ENCODE measurements at regions of chr4 and their contacts with region 1.

Region 1: DNA sequence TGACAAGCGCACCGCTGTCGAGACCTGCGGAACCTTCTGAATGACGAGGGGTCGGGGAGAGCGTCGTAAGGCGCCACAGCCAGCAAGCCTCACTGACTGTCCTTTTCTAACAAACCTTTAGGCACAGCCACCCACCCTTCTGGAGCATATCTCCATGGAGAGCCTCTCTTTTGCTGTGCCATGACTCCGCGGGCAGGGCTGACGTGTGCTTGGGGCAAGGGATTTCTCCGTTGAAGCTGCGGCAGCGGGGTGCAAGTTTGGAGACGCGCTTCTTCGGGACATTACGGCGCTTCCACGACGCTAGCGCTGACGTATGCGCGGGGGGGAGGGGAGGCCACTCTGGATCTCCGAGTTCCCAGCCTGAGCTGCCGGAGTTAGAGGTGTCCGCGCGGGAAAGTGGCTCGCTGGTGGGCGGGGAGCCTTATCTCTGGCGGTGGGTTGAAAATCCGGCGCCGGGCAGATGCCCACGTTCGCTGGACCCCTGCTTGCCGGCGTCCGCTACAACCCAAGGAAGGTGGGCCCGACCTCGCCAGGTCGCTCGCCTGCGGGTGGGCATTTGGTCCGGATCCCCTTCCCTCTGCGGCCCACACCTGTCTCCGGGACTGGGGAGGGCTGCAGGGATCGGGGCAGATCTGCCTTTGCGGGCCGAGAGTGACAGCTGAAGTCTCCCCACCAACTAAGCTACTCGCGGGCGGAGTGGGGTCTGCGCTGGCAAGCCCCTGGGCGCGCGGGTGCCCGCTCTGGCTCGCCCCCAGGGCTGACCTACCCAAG is 543 bp upstream of the SLC10A7 start:
- DNase-seq: peak; percentile 63 to 83 (median 76)
- ATAC-seq: peak; percentile 93
- H3K4me3 ChIP-seq: peak overlapping the region; percentile 95
- H3K4me3 Mint-ChIP-seq: no peak overlapping the region
- H3K27ac ChIP-seq: peak overlapping the region; percentile 85
- H3K27ac Mint-ChIP-seq: peak overlapping the region in 2 of 9 donors; percentile 58 to 69
- H3K4me1 ChIP-seq: peaks cover 13 to 24% of the 10 kb centered on the region in 2 donors
- H3K4me1 Mint-ChIP-seq: peaks cover 17 to 37% (median 31%) of the 10 kb centered on the region in 7 donors
- H3K27me3 ChIP-seq: no peaks in the 10 kb centered on the region
- H3K27me3 Mint-ChIP-seq: peaks cover 0 to 7% (median 0%) of the 10 kb centered on the region in 5 donors

Region 2: DNA sequence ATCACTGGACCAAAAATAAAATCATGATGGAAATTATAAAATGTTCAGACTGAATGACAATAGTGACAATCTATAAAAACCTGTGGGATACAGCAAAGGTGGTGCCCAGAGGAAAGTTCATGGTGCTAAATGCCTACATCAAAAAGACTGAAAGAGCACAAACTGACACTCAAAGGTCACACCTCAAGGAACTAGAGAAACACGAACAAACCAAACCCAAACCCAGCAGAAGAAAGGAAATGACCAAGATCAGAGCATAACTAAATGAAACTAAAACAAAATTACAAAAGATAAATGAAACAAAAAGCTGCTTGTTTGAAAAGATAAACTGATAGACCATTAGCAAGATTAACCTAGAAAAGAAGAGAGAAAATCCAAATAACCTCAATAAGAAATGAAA is 1502.9 kb before region 1 on chr4:
- CTCF ChIA-PET with region 1: no interaction called
- POLR2A ChIA-PET with region 1: no interaction called
- intact Hi-C with region 1: loop called in 1 of 2 experiments (anchors 5 kb)
- DNase-seq: peak in 2 of 9 donors; percentile 1 to 5
- ATAC-seq: no peak
- H3K4me3 ChIP-seq: no peak overlapping the region
- H3K4me3 Mint-ChIP-seq: peak overlapping the region in 9 of 10 donors; percentile 0 to 78 (median 52)
- H3K27ac ChIP-seq: peak overlapping the region; percentile 29
- H3K27ac Mint-ChIP-seq: peak overlapping the region in 8 of 9 donors; percentile 50 to 93 (median 74)
- H3K4me1 ChIP-seq: peaks cover 6 to 11% of the 10 kb centered on the region in 2 donors
- H3K4me1 Mint-ChIP-seq: peaks cover 16 to 52% (median 40%) of the 10 kb centered on the region in 7 donors
- H3K27me3 ChIP-seq: no peaks in the 10 kb centered on the region
- H3K27me3 Mint-ChIP-seq: no peaks in the 10 kb centered on the region

Region 3: GRCh38 chr4:146175541-146176453 is 346.5 kb before region 1 on chr4 and contains the start of gene LSM6:
- CTCF ChIA-PET with region 1: no interaction called
- POLR2A ChIA-PET with region 1: no interaction called
- intact Hi-C with region 1: loop called (anchors 1 kb)
- DNase-seq: peak; percentile 63 to 86 (median 84)
- ATAC-seq: peak; percentile 94
- H3K4me3 ChIP-seq: peak within 1 kb of the TSS; percentile 87
- H3K4me3 Mint-ChIP-seq: peak within 1 kb of the TSS; percentile 88 to 95 (median 92)
- H3K27ac ChIP-seq: peak within 1 kb of the TSS; percentile 94
- H3K27ac Mint-ChIP-seq: peak within 1 kb of the TSS; percentile 82 to 99 (median 97)
- H3K4me1 ChIP-seq: peaks cover 25 to 31% of the 10 kb centered on the region in 2 donors
- H3K4me1 Mint-ChIP-seq: peaks cover 29 to 66% (median 57%) of the 10 kb centered on the region in 7 donors
- H3K27me3 ChIP-seq: no peaks in the 10 kb centered on the region
- H3K27me3 Mint-ChIP-seq: no peaks in the 10 kb centered on the region
- total RNA-seq, gene LSM6: 24.7 to 49.7 (median 46.2) TPM

Region 4: DNA sequence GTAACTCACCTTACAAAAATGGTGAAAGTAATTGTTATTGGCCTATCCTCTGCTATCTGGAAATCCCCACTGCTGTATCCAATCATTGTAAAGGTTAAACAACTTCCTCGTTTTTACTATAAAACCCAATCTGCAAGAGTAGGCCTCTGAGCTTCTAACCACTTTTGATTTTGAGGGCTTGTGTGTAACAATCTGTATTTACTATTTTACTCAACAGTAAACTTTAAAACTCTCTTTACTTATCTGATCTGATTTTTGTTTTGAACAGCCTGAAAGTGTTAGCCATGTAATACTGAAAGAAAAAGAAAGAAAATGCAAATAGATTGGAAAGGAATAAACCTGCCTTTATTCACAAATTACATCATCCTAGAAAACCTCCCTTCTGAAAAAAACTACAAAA is 63.7 kb before region 1 on chr4:
- CTCF ChIA-PET with region 1: no interaction called
- POLR2A ChIA-PET with region 1: no interaction called
- intact Hi-C with region 1: loop called (anchors 1 kb)
- DNase-seq: peak in 7 of 9 donors; percentile 8 to 43 (median 20)
- ATAC-seq: peak; percentile 89
- H3K4me3 ChIP-seq: no peak overlapping the region
- H3K4me3 Mint-ChIP-seq: peak overlapping the region; percentile 0 to 70 (median 58)
- H3K27ac ChIP-seq: peak overlapping the region; percentile 30
- H3K27ac Mint-ChIP-seq: peak overlapping the region; percentile 28 to 88 (median 83)
- H3K4me1 ChIP-seq: peaks cover 0 to 4% of the 10 kb centered on the region in 2 donors
- H3K4me1 Mint-ChIP-seq: peaks cover 15 to 47% (median 35%) of the 10 kb centered on the region in 7 donors
- H3K27me3 ChIP-seq: no peaks in the 10 kb centered on the region
- H3K27me3 Mint-ChIP-seq: no peaks in the 10 kb centered on the region

Region 5: DNA sequence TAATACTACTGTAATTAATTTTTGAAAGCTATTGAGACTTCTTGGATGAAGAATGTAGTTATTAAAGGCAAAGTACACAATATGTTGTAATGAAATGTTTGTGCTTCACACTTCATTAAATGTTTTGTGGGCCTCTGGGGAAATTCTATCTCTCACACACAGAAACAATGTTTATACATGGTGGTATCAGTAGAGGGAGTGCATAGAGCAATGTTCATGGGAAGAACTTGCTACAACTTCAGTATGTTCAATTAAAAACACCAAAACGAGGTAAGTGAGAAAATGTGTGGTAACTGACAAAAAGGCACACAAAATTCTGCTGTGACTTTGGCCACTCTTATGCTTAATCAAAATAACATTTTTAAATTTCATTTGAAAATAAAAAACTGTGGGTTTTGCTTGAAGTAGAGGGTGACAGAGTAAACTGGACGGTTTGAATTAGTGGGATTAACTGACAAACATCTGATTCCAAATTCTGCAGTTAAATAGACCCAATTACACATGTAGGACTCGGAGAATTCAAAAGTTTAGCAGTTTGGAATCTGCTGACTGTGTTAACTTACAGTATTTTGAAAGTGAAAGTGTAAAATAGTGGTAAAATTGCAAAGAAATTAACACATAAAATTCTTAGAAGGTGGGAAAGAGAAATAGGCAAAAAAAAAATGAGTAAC is 534.8 kb after region 1 on chr4:
- CTCF ChIA-PET with region 1: no interaction called
- POLR2A ChIA-PET with region 1: no interaction called
- intact Hi-C with region 1: loop called in 1 of 2 experiments (anchors 5 kb)
- DNase-seq: peak in 3 of 9 donors; percentile 2 to 4 (median 3)
- ATAC-seq: no peak
- H3K4me3 ChIP-seq: peak overlapping the region; percentile 57
- H3K4me3 Mint-ChIP-seq: peak overlapping the region; percentile 72 to 94 (median 86)
- H3K27ac ChIP-seq: peak overlapping the region; percentile 36
- H3K27ac Mint-ChIP-seq: peak overlapping the region; percentile 86 to 92 (median 89)
- H3K4me1 ChIP-seq: peaks cover 0 to 3% of the 10 kb centered on the region in 2 donors
- H3K4me1 Mint-ChIP-seq: peaks cover 0 to 14% (median 10%) of the 10 kb centered on the region in 7 donors
- H3K27me3 ChIP-seq: no peaks in the 10 kb centered on the region
- H3K27me3 Mint-ChIP-seq: peaks cover 0 to 8% (median 3%) of the 10 kb centered on the region in 5 donors

Measured in naive thymus-derived CD4-positive, alpha-beta T cell (primary cell).